ENCODE measurements at regions of chr14 and their contacts with region 1.

Region 1: DNA sequence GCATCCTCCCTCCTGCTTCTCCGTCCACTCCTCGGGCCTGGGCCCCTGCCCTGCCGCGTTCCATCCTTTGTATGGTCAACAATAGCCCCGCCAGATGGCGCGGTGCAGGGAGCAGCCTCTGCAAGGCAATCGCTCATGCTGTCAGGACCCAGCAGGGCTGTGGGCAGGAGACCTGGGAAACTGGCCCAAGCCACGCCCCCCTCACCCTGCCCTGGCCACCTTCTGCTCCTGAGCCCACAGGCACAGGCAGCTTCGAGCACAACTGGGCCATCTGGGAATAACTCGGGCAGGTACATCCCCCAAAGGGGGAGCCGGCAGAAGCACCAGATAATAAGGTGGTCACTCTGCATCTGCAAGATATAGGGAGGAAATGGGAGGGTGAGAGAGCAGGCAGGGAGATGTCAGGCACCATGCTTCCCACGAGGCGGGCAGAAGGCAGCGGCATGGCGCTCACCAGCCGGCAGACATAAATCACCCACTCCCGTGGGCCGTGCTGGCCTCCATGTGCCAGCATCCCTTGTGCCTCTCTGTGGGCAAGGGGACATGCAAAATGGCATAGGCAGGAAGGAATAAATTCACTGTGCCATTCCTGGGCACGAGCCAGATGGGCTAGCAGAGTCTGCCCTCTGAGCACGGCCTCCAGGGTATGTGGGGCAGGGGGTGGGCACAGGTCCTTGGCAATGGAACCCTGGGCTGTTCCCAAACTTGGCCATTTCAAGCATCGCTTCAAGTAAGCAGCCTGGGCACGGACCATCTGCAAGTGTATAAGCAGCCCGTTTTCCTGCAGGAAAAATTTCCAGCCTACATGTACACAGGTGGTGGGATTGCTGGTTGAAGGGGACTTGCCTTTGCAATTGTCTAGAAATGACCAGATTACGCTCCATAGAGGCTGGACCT is 40.5 kb downstream of the CCDC85C start:
- DNase-seq: peak; percentile 76 to 91 (median 88)
- ATAC-seq: peak; percentile 69 to 75
- H3K4me3 ChIP-seq: no peak overlapping the region
- H3K27ac ChIP-seq: no peak overlapping the region
- H3K4me1 ChIP-seq: peaks cover 10% of the 10 kb centered on the region
- H3K27me3 ChIP-seq: no peaks in the 10 kb centered on the region

Region 2: GRCh38 chr14:99604283-99604765 is 40.8 kb after region 1 on chr14:
- intact Hi-C with region 1: loop called in 1 of 4 experiments (anchors 5 kb)
- DNase-seq: peak; percentile 94 to 99 (median 98)
- ATAC-seq: peak; percentile 98
- H3K4me3 ChIP-seq: peak overlapping the region; percentile 84
- H3K27ac ChIP-seq: peak overlapping the region; percentile 63
- H3K4me1 ChIP-seq: peaks cover 10% of the 10 kb centered on the region
- H3K27me3 ChIP-seq: no peaks in the 10 kb centered on the region

Region 3: DNA sequence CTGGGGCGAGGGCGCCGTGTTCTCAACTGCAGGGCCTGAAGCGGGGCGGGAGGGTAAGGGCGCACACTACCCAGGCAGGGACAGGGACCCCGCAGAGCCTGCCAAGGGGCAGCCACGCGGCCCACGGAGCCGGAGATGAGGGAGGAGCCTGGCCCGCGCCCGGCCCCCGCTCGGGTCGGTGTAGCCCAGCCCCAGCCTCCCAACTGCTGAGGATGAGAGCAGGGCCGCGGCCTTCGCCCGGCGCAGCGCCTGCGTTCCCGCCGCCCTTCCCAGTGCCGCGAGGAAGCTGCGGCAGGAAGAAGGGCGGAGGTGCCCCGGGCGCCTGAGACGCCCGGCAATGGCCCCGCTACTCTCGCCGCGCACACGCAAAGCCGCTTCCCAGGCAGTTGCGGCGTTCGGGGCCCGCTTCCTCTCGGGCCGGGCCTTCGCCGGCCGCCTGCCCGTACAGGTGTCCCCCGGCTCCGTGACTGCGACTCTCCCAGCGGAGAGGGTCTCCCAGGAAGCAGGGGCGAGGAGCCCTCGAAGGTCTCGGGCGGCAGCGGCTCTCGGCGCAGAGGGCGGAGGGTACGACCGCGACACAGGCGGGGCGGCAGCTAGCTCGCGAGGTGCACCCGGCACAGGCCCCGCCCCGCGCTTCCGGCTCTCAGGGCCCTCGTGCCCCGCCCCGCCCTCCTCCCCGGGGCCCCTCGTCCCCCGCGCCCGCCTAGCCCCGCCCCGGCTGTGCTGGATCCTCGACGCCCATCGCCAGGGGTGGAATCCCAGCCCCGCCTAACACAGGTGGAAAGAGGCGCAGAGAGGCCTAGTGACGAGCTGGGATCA is 650.7 kb after region 1 on chr14:
- intact Hi-C with region 1: no loop called
- DNase-seq: peak; percentile 93 to 98 (median 96)
- ATAC-seq: peak; percentile 97 to 98
- H3K4me3 ChIP-seq: peak overlapping the region; percentile 55
- H3K27ac ChIP-seq: peak overlapping the region; percentile 89
- H3K4me1 ChIP-seq: no peaks in the 10 kb centered on the region
- H3K27me3 ChIP-seq: no peaks in the 10 kb centered on the region